ENCODE measurements at regions of chr9 and their contacts with region 1.

Region 1: DNA sequence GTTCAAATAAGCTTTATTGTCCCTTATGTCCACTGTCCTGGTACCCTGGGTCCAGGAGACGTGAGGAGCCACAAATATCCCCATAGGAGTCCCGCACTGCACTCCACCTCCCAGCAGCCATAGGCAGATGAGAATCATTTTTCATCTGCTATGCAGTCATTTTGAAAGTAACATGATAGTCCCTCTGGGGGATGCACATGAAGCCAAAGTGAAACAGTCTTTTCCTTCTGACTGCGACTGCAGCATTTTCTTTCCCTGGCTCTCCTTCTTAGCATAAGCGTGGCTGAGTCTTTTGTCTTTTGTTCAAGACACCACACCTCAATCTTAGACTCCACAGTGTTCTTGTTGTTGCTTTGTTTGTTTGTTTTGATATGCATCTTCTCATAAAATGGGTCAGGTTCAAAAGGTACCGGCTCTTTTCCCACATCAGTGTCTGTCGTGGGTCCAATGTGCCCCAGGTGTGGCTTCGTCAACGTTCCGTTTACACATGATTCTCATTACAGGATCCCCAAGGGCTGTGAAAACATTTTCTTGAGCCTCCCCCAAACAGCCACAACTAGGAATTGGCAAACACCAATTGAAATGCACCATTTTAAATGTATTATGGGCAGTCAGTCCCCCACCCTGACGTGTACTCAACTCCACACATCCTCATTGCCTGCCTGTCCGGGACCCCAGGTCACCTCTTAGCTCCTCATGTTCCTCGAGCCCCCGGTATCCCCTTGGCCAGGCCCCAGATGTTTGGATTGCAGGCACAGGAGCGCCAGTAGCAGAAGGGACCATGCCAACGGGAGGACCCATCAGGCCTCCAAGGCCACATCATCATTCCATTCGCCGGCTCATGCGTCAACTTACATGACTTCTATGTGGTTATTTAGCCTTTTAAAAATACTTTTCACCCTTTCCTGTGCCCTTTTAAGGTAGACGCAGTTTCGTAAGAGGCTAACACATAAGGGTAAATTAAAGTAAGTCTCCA is 237.8 kb upstream of the DAPK1 start:
- DNase-seq: peak; percentile 45
- H3K4me3 ChIP-seq: no peak overlapping the region
- H3K27ac ChIP-seq: no peak overlapping the region
- H3K4me1 ChIP-seq: peaks cover 8% of the 10 kb centered on the region
- H3K27me3 ChIP-seq: no peaks in the 10 kb centered on the region
- CTCF ChIP-seq: no peak

Region 2: GRCh38 chr9:87276327-87276841 is 16.6 kb after region 1 on chr9:
- CTCF ChIA-PET with region 1: no interaction called
- POLR2A ChIA-PET with region 1: interaction called, 25 read pairs
- intact Hi-C with region 1: no loop called
- DNase-seq: peak; percentile 12
- H3K4me3 ChIP-seq: no peak overlapping the region
- H3K27ac ChIP-seq: no peak overlapping the region
- H3K4me1 ChIP-seq: no peaks in the 10 kb centered on the region
- H3K27me3 ChIP-seq: no peaks in the 10 kb centered on the region
- CTCF ChIP-seq: no peak

Region 3: DNA sequence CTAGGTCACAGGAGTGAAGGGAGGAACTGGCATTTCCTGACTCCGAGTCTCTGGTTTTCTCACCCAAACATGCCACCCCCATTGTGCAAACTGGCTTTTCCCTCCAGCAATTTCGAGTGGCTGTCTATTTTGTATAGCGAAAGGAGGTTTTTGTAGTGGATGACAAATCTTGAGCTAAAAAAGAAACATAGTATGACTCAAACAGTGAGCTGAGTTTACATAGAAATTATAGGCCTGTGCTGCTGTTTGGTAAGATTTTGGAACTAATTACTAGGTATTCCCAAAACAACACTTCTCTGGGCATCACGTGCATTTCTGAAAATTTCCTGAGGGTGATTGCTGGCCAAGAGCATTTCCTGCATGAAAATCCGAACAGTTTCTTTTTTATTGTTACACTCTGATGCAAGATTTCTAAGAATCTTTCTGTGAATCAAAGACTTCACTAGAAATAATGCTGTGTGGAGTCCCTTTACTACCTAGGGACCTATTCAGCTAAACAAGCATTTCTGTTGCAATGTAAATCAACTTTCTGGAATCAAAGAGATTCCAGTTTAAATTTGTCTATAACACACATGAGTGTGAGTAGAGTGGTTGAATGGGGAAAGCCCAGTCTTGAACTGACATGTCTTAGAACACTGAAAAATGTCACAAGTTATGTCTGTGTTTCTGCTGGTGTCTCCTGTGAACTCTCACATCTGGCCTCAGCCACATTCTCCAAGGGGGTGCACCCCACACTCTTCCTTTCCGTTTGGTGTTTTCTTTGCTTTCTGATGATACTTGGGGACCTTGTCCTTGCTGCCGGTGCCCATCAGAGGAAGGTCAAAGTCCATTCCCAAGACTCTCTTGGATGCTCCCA is 204.5 kb after region 1 on chr9:
- CTCF ChIA-PET with region 1: no interaction called
- POLR2A ChIA-PET with region 1: no interaction called
- intact Hi-C with region 1: no loop called
- DNase-seq: peak; percentile 52
- H3K4me3 ChIP-seq: no peak overlapping the region
- H3K27ac ChIP-seq: peak overlapping the region; percentile 88
- H3K4me1 ChIP-seq: peaks cover 37% of the 10 kb centered on the region
- H3K27me3 ChIP-seq: no peaks in the 10 kb centered on the region
- CTCF ChIP-seq: no peak

Measured in A673 (cell line).